ENCODE measurements at regions of chr6 and their contacts with region 1.

Region 1: GRCh38 chr6:154276810-154277628 is 79.6 kb downstream of the IPCEF1 start:
- DNase-seq: peak in 2 of 9 experiments; percentile 64 to 80
- ATAC-seq: peak; percentile 89
- H3K4me3 ChIP-seq: peak overlapping the region; percentile 20 to 31
- H3K4me3 Mint-ChIP-seq: peak overlapping the region; percentile 66
- H3K27ac ChIP-seq: no peak overlapping the region
- H3K27ac Mint-ChIP-seq: peak overlapping the region; percentile 64
- H3K4me1 ChIP-seq: peaks cover 23% of the 10 kb centered on the region
- H3K4me1 Mint-ChIP-seq: peaks cover 42% of the 10 kb centered on the region
- H3K27me3 ChIP-seq: no peaks in the 10 kb centered on the region
- H3K27me3 Mint-ChIP-seq: no peaks in the 10 kb centered on the region
- CTCF ChIP-seq: peak; percentile 72

Region 2: DNA sequence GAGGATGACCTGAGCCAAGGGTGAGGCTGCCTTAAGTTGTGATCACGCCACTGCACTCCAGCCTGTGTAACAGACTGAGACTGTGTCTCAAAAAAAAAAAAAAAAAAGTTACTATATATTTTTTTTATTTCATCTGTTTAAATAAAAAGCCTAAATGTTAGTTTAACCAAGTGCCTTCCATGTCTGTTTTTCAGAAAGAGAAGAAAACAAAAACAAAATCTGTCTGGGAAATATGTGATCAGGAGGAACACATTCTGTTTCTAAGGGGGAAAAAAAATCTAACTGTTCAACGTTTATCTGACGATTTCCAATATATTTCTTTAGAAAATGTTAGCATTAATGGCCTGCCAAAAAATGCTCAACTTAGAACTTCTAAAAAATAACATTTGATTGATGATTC is 67.5 kb before region 1 on chr6:
- CTCF ChIA-PET with region 1: interaction called, 8 read pairs
- POLR2A ChIA-PET with region 1: interaction called, 3 read pairs
- intact Hi-C with region 1: loop called in 1 of 2 experiments (anchors 2 kb)
- DNase-seq: no peak
- ATAC-seq: no peak
- H3K4me3 ChIP-seq: no peak overlapping the region
- H3K4me3 Mint-ChIP-seq: no peak overlapping the region
- H3K27ac ChIP-seq: no peak overlapping the region
- H3K27ac Mint-ChIP-seq: no peak overlapping the region
- H3K4me1 ChIP-seq: no peaks in the 10 kb centered on the region
- H3K4me1 Mint-ChIP-seq: peaks cover 35% of the 10 kb centered on the region
- H3K27me3 ChIP-seq: no peaks in the 10 kb centered on the region
- H3K27me3 Mint-ChIP-seq: no peaks in the 10 kb centered on the region
- CTCF ChIP-seq: no peak

Region 3: GRCh38 chr6:154229786-154230185 is 47.2 kb before region 1 on chr6:
- CTCF ChIA-PET with region 1: interaction called, 11 read pairs
- POLR2A ChIA-PET with region 1: interaction called, 6 read pairs
- intact Hi-C with region 1: loop called in 1 of 2 experiments (anchors 5 kb)
- DNase-seq: peak in 2 of 9 experiments; percentile 53 to 76
- ATAC-seq: peak; percentile 64
- H3K4me3 ChIP-seq: peak overlapping the region; percentile 11 to 47
- H3K4me3 Mint-ChIP-seq: peak overlapping the region; percentile 85
- H3K27ac ChIP-seq: peak overlapping the region; percentile 19 to 61
- H3K27ac Mint-ChIP-seq: peak overlapping the region; percentile 91
- H3K4me1 ChIP-seq: peaks cover 61% of the 10 kb centered on the region
- H3K4me1 Mint-ChIP-seq: peaks cover 85% of the 10 kb centered on the region
- H3K27me3 ChIP-seq: no peaks in the 10 kb centered on the region
- H3K27me3 Mint-ChIP-seq: no peaks in the 10 kb centered on the region
- CTCF ChIP-seq: no peak

Region 4: GRCh38 chr6:154252678-154253077 is 24.3 kb before region 1 on chr6:
- CTCF ChIA-PET with region 1: interaction called, 40 read pairs
- POLR2A ChIA-PET with region 1: interaction called, 21 read pairs
- intact Hi-C with region 1: loop called (anchors 1 to 2 kb)
- DNase-seq: no peak
- ATAC-seq: no peak
- H3K4me3 ChIP-seq: no peak overlapping the region
- H3K4me3 Mint-ChIP-seq: peak overlapping the region; percentile 17
- H3K27ac ChIP-seq: no peak overlapping the region
- H3K27ac Mint-ChIP-seq: peak overlapping the region; percentile 86
- H3K4me1 ChIP-seq: peaks cover 60% of the 10 kb centered on the region
- H3K4me1 Mint-ChIP-seq: peaks cover 72% of the 10 kb centered on the region
- H3K27me3 ChIP-seq: no peaks in the 10 kb centered on the region
- H3K27me3 Mint-ChIP-seq: no peaks in the 10 kb centered on the region
- CTCF ChIP-seq: no peak

Region 5: GRCh38 chr6:154370545-154370944 is 93.5 kb after region 1 on chr6:
- CTCF ChIA-PET with region 1: interaction called, 24 read pairs
- POLR2A ChIA-PET with region 1: no interaction called
- intact Hi-C with region 1: loop called (anchors 2 to 5 kb)
- DNase-seq: peak in 2 of 9 experiments; percentile 25 to 52
- ATAC-seq: peak; percentile 31
- H3K4me3 ChIP-seq: no peak overlapping the region
- H3K4me3 Mint-ChIP-seq: no peak overlapping the region
- H3K27ac ChIP-seq: no peak overlapping the region
- H3K27ac Mint-ChIP-seq: no peak overlapping the region
- H3K4me1 ChIP-seq: no peaks in the 10 kb centered on the region
- H3K4me1 Mint-ChIP-seq: no peaks in the 10 kb centered on the region
- H3K27me3 ChIP-seq: no peaks in the 10 kb centered on the region
- H3K27me3 Mint-ChIP-seq: no peaks in the 10 kb centered on the region
- CTCF ChIP-seq: peak; percentile 33